ENCODE measurements at regions of chr2 and their contacts with region 1.

Region 1: DNA sequence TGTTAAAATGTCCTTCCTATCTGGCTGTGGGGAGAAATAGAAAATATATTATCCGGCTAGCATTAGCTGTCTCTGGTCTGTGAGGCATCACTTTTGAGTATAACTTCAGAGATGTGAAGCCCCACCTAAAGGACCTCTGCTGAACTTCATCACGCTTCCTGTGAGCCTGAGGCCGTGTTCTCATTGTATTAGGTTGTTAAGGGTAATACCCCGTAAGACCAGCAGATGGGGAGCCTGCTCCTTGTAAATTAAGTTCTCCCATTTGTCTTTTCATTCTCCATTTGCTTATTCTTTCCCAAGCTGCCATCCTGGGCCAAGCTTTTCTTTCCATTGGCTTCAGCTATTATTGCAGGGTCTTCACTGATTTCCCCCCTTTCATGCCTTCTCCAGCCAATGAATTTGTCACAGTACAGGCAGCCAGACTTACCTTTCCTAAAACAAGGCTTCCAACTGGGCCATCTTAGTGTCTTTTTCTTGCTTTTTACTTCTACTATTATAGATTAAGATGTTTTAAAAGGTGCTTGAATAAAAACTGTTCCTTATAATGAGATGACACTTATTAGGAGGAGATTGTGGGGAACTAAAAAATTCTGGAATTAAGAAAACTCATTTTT is 12.4 kb downstream of the NIF3L1 start:
- DNase-seq: peak; percentile 68
- H3K4me3 Mint-ChIP-seq: no peak overlapping the region
- H3K27ac Mint-ChIP-seq: peak overlapping the region; percentile 59
- H3K4me1 Mint-ChIP-seq: peaks cover 18% of the 10 kb centered on the region
- H3K27me3 Mint-ChIP-seq: no peaks in the 10 kb centered on the region

Region 2: DNA sequence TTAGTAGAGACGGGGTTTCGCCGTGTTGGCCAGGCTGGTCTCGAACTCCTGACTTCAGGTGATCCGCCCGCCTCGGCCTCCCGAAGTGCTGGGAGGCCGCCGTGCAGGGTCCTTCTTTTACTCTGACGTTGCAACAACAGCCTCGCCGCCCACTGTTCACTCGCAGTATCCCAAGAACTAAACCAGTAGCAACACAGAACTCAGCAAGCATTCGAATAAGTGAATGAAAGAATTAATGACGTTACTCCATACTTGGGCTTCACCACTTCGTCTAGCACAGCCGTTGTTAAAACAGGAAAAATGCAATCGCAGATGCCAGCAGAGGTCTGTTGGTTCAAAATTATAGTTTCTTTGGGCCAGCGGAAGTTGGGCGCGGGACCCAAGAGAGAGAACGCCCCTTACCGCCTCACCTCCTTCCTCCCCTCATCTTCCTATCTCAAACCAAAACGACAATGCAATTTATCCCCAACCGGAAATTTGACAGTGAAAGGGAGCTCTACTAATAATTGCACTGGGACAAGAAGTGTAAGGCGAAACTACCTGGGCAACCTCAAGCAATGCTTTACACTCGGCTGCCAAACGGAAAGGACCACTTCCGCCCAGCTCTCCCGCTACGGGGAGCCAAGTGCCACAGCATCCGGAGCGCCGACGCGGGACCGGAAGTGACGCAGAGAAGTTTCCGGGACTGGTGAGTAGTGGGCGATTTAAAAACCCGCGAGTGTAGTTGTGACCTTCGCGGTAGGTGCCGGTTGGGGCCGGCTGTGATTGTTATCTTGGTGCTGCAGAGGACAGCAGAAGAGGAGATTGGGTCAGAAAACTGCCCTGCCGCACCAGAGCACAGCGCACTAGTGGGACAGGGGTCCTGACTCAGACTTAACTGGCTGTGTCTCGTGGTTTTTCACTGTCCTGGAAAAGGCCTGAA is 12.6 kb before region 1 on chr2 and contains the starts of genes NIF3L1 and PPIL3:
- intact Hi-C with region 1: loop called (anchors 1 kb)
- DNase-seq: peak; percentile 96
- H3K4me3 Mint-ChIP-seq: peak within 1 kb of the TSS; percentile 97
- H3K27ac Mint-ChIP-seq: peak within 1 kb of the TSS; percentile 99
- H3K4me1 Mint-ChIP-seq: peaks cover 54% of the 10 kb centered on the region
- H3K27me3 Mint-ChIP-seq: no peaks in the 10 kb centered on the region
- total RNA-seq, gene NIF3L1: 26.6 and 27.3 TPM in 2 replicates
- total RNA-seq, gene PPIL3: 44.2 TPM in 2 replicates

Region 3: GRCh38 chr2:200963124-200963917 is 61.8 kb after region 1 on chr2 and contains the start of gene ORC2:
- intact Hi-C with region 1: loop called (anchors 2 kb)
- DNase-seq: peak; percentile 93
- H3K4me3 Mint-ChIP-seq: peak within 1 kb of the TSS; percentile 97
- H3K27ac Mint-ChIP-seq: peak within 1 kb of the TSS; percentile 93
- H3K4me1 Mint-ChIP-seq: peaks cover 58% of the 10 kb centered on the region
- H3K27me3 Mint-ChIP-seq: no peaks in the 10 kb centered on the region
- total RNA-seq, gene ORC2: 63.1 and 63.3 TPM in 2 replicates

Region 4: DNA sequence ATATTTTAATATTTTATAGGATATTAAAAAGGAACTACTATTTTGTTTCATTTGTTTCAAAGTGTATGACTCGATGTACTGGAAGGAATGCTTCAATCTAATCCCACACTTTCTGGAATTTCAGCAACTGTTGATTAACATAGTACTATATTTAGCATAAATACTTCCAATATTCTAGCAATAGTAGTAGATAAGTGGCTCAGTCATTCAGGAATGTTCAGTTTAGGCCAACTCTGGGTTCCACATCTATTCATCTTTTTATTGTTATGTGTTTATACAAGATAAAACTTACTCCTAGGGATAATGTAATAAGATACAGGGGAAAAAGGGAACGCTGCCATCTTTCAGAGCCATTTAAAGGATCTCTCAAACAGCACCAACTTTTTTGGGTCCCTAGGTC is 84.2 kb after region 1 on chr2:
- intact Hi-C with region 1: no loop called
- DNase-seq: no peak
- H3K4me3 Mint-ChIP-seq: no peak overlapping the region
- H3K27ac Mint-ChIP-seq: no peak overlapping the region
- H3K4me1 Mint-ChIP-seq: no peaks in the 10 kb centered on the region
- H3K27me3 Mint-ChIP-seq: no peaks in the 10 kb centered on the region

Region 5: DNA sequence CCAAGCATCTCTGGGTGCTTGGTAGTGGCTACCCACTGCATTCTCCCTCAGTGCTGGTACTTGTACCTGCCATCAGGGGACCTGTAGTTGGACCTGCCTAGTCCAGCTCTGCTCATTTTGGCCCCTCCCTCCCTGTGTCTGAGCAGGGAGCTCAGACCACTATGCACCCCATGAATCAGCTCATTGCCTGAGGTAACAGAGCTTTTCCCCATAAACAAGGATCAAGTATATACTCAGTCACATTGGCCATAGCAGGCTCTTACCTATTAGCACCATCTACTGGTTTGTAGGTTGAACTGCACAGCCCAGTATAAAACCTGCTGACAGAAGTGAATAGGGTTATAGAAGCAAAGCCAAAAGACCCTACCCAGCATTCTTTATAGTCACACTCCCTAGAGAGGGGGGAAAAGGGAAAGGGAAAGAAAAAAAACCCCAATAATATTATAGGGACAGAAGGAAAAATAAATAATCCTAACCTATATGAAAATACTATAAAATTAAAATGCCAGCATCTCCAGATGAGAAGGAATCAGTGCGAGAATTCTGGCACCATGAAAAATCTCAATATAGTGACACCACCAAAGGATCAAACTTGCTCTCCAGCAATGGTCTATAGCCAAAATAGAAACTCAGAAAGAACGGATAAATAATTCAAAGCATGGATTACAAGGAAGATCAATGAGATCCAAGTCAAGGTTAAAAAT is 462.4 kb after region 1 on chr2:
- intact Hi-C with region 1: loop called (anchors 10 kb)
- DNase-seq: peak; percentile 30
- H3K4me3 Mint-ChIP-seq: no peak overlapping the region
- H3K27ac Mint-ChIP-seq: no peak overlapping the region
- H3K4me1 Mint-ChIP-seq: peaks cover 45% of the 10 kb centered on the region
- H3K27me3 Mint-ChIP-seq: no peaks in the 10 kb centered on the region

Measured in activated T-helper 1 cell treated with anti-CD3 and anti-CD28 coated beads, Interleukin-12 subunit alpha, Interleukin-12 subunit beta, Interleukin-2, Interleukin-4 antibody, amounts not matched to agents 30 ng/mL and 10 ng/mL and 1 ng/mL, durations not matched to agents 14 hours and 24 hours and 36 hours (primary cell).